CD14-positive monocyte (primary cell): ENCODE measurements at regions of chr1 and their contacts with region 1.

Region 1: DNA sequence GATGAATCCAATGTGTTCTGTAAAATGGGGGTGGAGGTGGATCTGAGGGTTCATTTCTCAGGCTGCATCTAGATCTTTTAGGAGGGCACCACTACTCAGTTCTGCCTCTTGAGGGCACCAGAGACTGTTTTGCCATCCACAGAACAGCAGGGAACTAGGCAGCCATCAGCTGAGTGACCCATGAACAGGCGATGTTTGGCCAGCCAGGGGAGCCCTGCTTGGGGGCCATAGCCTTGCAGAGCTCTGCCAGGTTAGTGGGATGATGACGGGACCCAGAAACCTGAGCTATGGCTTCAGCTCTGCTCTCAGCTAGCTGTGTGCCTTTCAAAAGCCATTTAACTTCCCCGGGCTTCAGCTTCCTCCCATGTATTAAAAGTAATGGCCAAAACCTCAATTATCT is 13.4 kb upstream of the NOS1AP start:
- DNase-seq: peak; percentile 55 to 65 (median 64)
- H3K4me3 ChIP-seq: no peak overlapping the region
- H3K4me3 Mint-ChIP-seq: no peak overlapping the region
- H3K27ac ChIP-seq: no peak overlapping the region
- H3K27ac Mint-ChIP-seq: no peak overlapping the region
- H3K4me1 ChIP-seq: no peaks in the 10 kb centered on the region
- H3K4me1 Mint-ChIP-seq: peaks cover 6% of the 10 kb centered on the region
- H3K27me3 ChIP-seq: no peaks in the 10 kb centered on the region
- H3K27me3 Mint-ChIP-seq: peaks cover 0 to 2% (median 2%) of the 10 kb centered on the region in 3 donors
- CTCF ChIP-seq: peak; percentile 88

Region 2: GRCh38 chr1:162276493-162276892 is 220.4 kb after region 1 on chr1:
- intact Hi-C with region 1: loop called (anchors 2 to 5 kb)
- DNase-seq: peak; percentile 8 to 47 (median 27)
- H3K4me3 ChIP-seq: no peak overlapping the region
- H3K4me3 Mint-ChIP-seq: no peak overlapping the region
- H3K27ac ChIP-seq: no peak overlapping the region
- H3K27ac Mint-ChIP-seq: no peak overlapping the region
- H3K4me1 ChIP-seq: no peaks in the 10 kb centered on the region
- H3K4me1 Mint-ChIP-seq: peaks cover 12% of the 10 kb centered on the region
- H3K27me3 ChIP-seq: no peaks in the 10 kb centered on the region
- H3K27me3 Mint-ChIP-seq: peaks cover 0 to 6% (median 0%) of the 10 kb centered on the region in 3 donors
- CTCF ChIP-seq: peak; percentile 55

Region 3: DNA sequence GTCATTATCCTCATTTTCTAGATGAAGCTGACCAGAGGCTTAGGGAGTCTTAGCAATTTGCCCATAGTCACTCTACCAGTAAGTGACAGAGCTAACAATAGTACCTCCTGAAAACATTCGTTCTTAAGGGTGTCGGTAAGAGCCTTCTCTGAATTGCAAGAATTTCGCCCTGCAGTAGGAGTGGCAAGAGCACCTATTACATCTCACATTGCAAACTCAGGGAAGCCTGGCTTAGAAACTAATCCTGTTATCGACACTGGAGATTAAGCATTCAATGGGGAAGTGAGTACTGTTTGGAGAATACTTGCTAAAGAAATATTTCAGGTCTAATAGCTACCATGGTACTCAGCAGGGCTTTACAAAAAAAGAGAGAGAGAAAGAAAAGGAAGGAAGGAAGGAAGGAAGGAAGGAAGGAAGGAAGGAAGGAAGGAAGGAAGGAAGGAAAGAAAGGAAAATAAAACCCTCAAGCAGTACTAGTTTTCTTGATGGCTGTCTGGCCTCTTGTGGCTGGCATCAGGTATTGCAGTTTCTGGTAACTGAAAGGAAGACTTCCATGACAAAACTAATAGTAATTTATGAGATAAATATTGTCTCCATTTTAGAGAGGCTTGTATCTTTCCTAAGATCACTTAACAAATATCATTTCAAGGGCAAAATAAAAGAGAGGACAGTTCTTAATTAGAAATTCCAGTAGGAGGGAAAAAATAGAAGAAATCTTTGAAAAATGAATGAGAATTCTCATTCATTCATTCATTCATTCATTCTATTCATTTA is 335.9 kb after region 1 on chr1:
- intact Hi-C with region 1: loop called (anchors 5 kb)
- DNase-seq: peak; percentile 16 to 43 (median 30)
- H3K4me3 ChIP-seq: peak overlapping the region in 1 of 3 experiments; percentile 19
- H3K4me3 Mint-ChIP-seq: no peak overlapping the region
- H3K27ac ChIP-seq: no peak overlapping the region
- H3K27ac Mint-ChIP-seq: no peak overlapping the region
- H3K4me1 ChIP-seq: peaks cover 7 to 24% of the 10 kb centered on the region in 2 donors
- H3K4me1 Mint-ChIP-seq: peaks cover 30% of the 10 kb centered on the region
- H3K27me3 ChIP-seq: peaks cover 0 to 3% of the 10 kb centered on the region in 2 donors
- H3K27me3 Mint-ChIP-seq: peaks cover 5 to 13% (median 5%) of the 10 kb centered on the region in 3 donors
- CTCF ChIP-seq: peak; percentile 77